ENCODE measurements at regions of chr10 and their contacts with region 1.

Region 1: GRCh38 chr10:113115556-113115955 is 165.5 kb downstream of the TCF7L2 start:
- DNase-seq: no peak
- ATAC-seq: no peak

Region 2: DNA sequence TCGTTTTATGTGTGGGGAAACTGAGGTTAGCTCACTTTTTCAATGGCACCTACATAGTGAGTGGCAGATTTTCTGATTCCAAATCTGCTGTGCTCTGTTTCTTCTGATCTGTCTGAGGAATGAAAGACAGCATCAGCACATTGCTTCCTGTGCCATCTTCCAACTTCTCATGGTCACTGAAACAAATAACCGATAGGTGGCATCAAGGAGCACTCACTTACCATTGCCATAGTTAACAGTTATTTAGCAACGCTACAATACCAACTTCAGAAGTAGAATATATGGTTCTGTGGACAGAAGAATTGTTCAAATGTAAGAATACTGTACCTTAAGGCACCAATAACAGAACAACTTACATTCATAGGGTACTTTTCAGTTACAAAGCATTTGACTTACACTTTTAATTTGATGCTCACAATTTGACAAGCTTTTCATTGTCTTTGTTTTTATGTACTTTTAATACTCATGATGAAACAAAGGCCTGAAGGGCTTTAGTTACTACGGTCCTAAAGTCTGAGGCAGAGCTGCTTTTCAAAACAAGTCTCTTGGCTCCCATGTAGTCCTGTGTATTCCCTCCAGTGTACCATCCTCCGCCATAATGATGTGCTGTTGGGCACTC is 394.4 kb before region 1 on chr10:
- intact Hi-C with region 1: loop called (anchors 5 kb)
- DNase-seq: no peak
- ATAC-seq: peak; percentile 28

Region 3: DNA sequence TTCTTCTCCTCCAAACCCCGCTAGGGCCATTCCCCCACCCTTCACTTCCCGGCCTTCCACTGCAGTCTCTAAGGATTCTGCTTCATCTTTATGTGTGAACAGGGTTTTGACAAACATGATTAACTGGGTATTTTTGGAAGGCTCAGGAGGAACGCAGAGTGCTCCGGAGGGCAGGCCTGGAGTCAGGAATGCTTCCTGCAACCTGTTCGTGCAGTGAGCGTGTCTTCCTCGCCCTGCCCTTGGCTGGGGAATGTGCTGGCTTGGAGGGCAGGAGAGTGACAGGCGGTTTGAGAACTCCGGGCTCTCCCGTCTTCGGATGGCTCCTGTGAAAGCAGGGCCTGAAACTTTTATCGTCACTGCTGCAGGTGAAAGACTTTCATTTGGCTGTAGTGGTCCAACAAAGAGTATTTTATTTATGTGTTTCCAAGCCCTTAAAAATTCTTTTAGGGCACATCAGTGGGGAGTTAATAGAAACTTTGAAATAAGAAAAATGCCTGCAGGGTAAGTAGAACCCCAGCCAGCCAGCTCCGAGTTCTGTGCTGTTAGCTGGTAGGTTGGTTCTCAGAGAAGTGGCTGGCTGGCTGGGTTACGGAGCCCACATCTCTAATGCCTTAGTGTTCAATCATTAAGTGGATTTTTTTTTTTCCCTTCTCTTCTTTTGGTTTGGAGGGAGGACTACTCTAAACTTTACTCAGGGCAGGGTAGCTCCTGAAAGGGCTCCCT is 114.5 kb before region 1 on chr10:
- intact Hi-C with region 1: no loop called
- DNase-seq: no peak
- ATAC-seq: peak; percentile 86

Measured in Right ventricle myocardium inferior (tissue), 1 donor.